T-cell (primary cell): ENCODE measurements at regions of chr10 and their contacts with region 1.

Region 1: DNA sequence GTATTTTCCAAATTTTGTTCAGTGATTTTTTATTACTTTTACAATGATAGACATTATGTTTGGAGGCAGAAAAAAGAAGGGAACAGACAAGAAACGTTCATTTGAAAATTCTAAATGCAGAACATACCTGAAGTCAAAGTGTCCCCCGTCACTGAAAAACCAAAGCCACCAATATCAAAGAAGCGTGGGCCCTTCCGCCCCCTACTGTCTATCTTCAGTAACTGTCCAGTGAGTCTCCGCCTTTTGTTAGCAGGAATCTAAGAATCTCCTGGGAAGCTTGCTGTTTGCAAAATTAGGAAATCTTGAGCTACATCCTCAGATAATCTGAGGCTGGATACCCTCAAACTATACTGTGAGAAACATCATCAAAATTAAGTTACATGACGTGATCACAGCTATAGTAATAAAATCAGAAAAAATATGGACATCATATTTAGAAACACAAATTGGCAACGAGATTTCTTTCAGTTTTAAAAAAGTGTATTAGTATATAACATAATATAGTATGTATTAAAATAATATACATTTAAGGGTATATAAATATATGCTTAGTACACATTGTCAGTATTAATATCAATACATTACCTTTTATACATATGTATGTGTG is 169.3 kb upstream of the AKR1E2 start:
- DNase-seq: peak in 30 of 35 experiments; percentile 8 to 74 (median 28)
- ATAC-seq: no peak
- H3K4me3 ChIP-seq: no peak overlapping the region
- H3K4me3 Mint-ChIP-seq: no peak overlapping the region
- H3K27ac ChIP-seq: no peak overlapping the region
- H3K27ac Mint-ChIP-seq: no peak overlapping the region
- H3K4me1 ChIP-seq: peaks cover 0 to 4% of the 10 kb centered on the region in 2 experiments
- H3K4me1 Mint-ChIP-seq: peaks cover 0 to 11% (median 7%) of the 10 kb centered on the region in 3 donors
- H3K27me3 ChIP-seq: peaks cover 0 to 9% of the 10 kb centered on the region in 2 experiments
- H3K27me3 Mint-ChIP-seq: peaks cover 3 to 4% of the 10 kb centered on the region in 2 donors

Region 2: DNA sequence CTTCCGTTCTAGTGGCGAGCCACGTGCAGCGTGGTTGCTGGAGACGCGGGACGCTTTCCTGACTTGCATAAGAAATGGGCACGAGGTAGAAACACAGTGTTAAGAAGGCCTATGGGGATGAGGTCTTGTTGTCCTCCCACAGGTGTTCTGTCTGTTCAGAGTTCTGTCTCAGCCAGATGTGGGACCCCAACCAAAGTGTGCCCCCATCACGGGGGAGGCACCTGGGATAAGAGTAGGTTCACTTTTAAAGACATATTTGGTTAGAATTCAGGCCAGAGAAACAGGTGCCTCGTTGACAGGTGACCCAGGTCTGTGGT is 1428.1 kb before region 1 on chr10:
- CTCF ChIA-PET with region 1: interaction called in 1 of 2 experiments, 11 read pairs
- POLR2A ChIA-PET with region 1: no interaction called
- DNase-seq: no peak
- ATAC-seq: no peak
- H3K4me3 ChIP-seq: no peak overlapping the region
- H3K4me3 Mint-ChIP-seq: no peak overlapping the region
- H3K27ac ChIP-seq: peak overlapping the region; percentile 54
- H3K27ac Mint-ChIP-seq: no peak overlapping the region
- H3K4me1 ChIP-seq: peaks cover 2 to 20% of the 10 kb centered on the region in 2 experiments
- H3K4me1 Mint-ChIP-seq: peaks cover 11 to 22% (median 17%) of the 10 kb centered on the region in 3 donors
- H3K27me3 ChIP-seq: peaks cover 0 to 10% of the 10 kb centered on the region in 2 experiments
- H3K27me3 Mint-ChIP-seq: peaks cover 5 to 10% of the 10 kb centered on the region in 2 donors

Region 3: GRCh38 chr10:3239066-3239919 is 1417.4 kb before region 1 on chr10:
- CTCF ChIA-PET with region 1: interaction called, 14 to 29 read pairs
- POLR2A ChIA-PET with region 1: no interaction called
- DNase-seq: peak; percentile 12 to 81 (median 60)
- ATAC-seq: peak; percentile 71 to 84 (median 78)
- H3K4me3 ChIP-seq: no peak overlapping the region
- H3K4me3 Mint-ChIP-seq: no peak overlapping the region
- H3K27ac ChIP-seq: no peak overlapping the region
- H3K27ac Mint-ChIP-seq: no peak overlapping the region
- H3K4me1 ChIP-seq: peaks cover 0 to 11% of the 10 kb centered on the region in 2 experiments
- H3K4me1 Mint-ChIP-seq: peaks cover 0 to 7% (median 4%) of the 10 kb centered on the region in 3 donors
- H3K27me3 ChIP-seq: peaks cover 0 to 35% of the 10 kb centered on the region in 2 experiments
- H3K27me3 Mint-ChIP-seq: peaks cover 14 to 16% of the 10 kb centered on the region in 2 donors

Region 4: GRCh38 chr10:3740157-3740871 is 916.4 kb before region 1 on chr10:
- CTCF ChIA-PET with region 1: interaction called in 1 of 2 experiments, 10 read pairs
- POLR2A ChIA-PET with region 1: no interaction called
- DNase-seq: no peak
- ATAC-seq: peak; percentile 60 to 86 (median 67)
- H3K4me3 ChIP-seq: no peak overlapping the region
- H3K4me3 Mint-ChIP-seq: no peak overlapping the region
- H3K27ac ChIP-seq: no peak overlapping the region
- H3K27ac Mint-ChIP-seq: peak overlapping the region; percentile 85 to 93
- H3K4me1 ChIP-seq: peaks cover 0 to 5% of the 10 kb centered on the region in 2 experiments
- H3K4me1 Mint-ChIP-seq: peaks cover 6 to 29% (median 24%) of the 10 kb centered on the region in 3 donors
- H3K27me3 ChIP-seq: no peaks in the 10 kb centered on the region
- H3K27me3 Mint-ChIP-seq: no peaks in the 10 kb centered on the region

Region 5: DNA sequence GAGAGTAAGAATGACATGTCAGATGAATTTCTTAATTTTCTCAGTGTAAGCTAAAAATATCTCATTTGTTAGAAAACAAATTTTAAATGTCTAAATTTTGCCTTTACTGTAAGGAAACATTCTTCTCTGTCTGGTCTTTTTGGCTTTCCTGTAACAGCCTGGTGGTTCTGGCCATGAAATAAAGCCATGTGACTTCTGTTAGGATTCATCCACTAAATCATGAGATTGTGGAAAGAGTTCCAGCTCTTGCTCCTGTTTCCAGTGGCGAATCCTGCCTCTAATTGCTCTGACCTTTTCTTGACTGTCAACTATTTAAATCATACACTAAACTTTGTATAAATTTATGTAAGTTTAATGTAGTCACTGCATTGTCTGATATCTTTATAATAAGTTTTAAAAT is 229.1 kb before region 1 on chr10:
- CTCF ChIA-PET with region 1: interaction called in 1 of 2 experiments, 10 read pairs
- POLR2A ChIA-PET with region 1: no interaction called
- DNase-seq: no peak
- ATAC-seq: no peak
- H3K4me3 ChIP-seq: no peak overlapping the region
- H3K4me3 Mint-ChIP-seq: no peak overlapping the region
- H3K27ac ChIP-seq: no peak overlapping the region
- H3K27ac Mint-ChIP-seq: no peak overlapping the region
- H3K4me1 ChIP-seq: no peaks in the 10 kb centered on the region
- H3K4me1 Mint-ChIP-seq: no peaks in the 10 kb centered on the region
- H3K27me3 ChIP-seq: no peaks in the 10 kb centered on the region
- H3K27me3 Mint-ChIP-seq: peaks cover 0 to 7% of the 10 kb centered on the region in 2 donors

Region 6: GRCh38 chr10:4519658-4520402 is 136.8 kb before region 1 on chr10:
- CTCF ChIA-PET with region 1: no interaction called
- POLR2A ChIA-PET with region 1: no interaction called
- DNase-seq: no peak
- ATAC-seq: no peak
- H3K4me3 ChIP-seq: no peak overlapping the region
- H3K4me3 Mint-ChIP-seq: no peak overlapping the region
- H3K27ac ChIP-seq: no peak overlapping the region
- H3K27ac Mint-ChIP-seq: no peak overlapping the region
- H3K4me1 ChIP-seq: no peaks in the 10 kb centered on the region
- H3K4me1 Mint-ChIP-seq: peaks cover 0 to 5% (median 3%) of the 10 kb centered on the region in 3 donors
- H3K27me3 ChIP-seq: peaks cover 0 to 8% of the 10 kb centered on the region in 2 experiments
- H3K27me3 Mint-ChIP-seq: peaks cover 16 to 17% of the 10 kb centered on the region in 2 donors

Region 7: GRCh38 chr10:4699950-4700730 is 43.5 kb after region 1 on chr10:
- CTCF ChIA-PET with region 1: no interaction called
- POLR2A ChIA-PET with region 1: no interaction called
- DNase-seq: no peak
- ATAC-seq: no peak
- H3K4me3 ChIP-seq: no peak overlapping the region
- H3K4me3 Mint-ChIP-seq: no peak overlapping the region
- H3K27ac ChIP-seq: no peak overlapping the region
- H3K27ac Mint-ChIP-seq: no peak overlapping the region
- H3K4me1 ChIP-seq: no peaks in the 10 kb centered on the region
- H3K4me1 Mint-ChIP-seq: no peaks in the 10 kb centered on the region
- H3K27me3 ChIP-seq: peaks cover 0 to 9% of the 10 kb centered on the region in 2 experiments
- H3K27me3 Mint-ChIP-seq: peaks cover 13 to 17% of the 10 kb centered on the region in 2 donors

Region 8: GRCh38 chr10:5265139-5265538 is 608.5 kb after region 1 on chr10:
- CTCF ChIA-PET with region 1: no interaction called
- POLR2A ChIA-PET with region 1: no interaction called
- DNase-seq: no peak
- ATAC-seq: no peak
- H3K4me3 ChIP-seq: no peak overlapping the region
- H3K4me3 Mint-ChIP-seq: no peak overlapping the region
- H3K27ac ChIP-seq: no peak overlapping the region
- H3K27ac Mint-ChIP-seq: no peak overlapping the region
- H3K4me1 ChIP-seq: no peaks in the 10 kb centered on the region
- H3K4me1 Mint-ChIP-seq: no peaks in the 10 kb centered on the region
- H3K27me3 ChIP-seq: no peaks in the 10 kb centered on the region
- H3K27me3 Mint-ChIP-seq: no peaks in the 10 kb centered on the region

Region 9: GRCh38 chr10:6593241-6593671 is 1936.6 kb after region 1 on chr10:
- CTCF ChIA-PET with region 1: no interaction called
- POLR2A ChIA-PET with region 1: no interaction called
- DNase-seq: peak in 4 of 35 experiments; percentile 19 to 60 (median 45)
- ATAC-seq: peak; percentile 30 to 73 (median 62)
- H3K4me3 ChIP-seq: no peak overlapping the region
- H3K4me3 Mint-ChIP-seq: peak overlapping the region; percentile 64 to 91 (median 68)
- H3K27ac ChIP-seq: peak overlapping the region; percentile 85
- H3K27ac Mint-ChIP-seq: peak overlapping the region; percentile 97 to 98
- H3K4me1 ChIP-seq: peaks cover 54 to 95% of the 10 kb centered on the region in 2 experiments
- H3K4me1 Mint-ChIP-seq: peaks cover 95% of the 10 kb centered on the region in 3 donors
- H3K27me3 ChIP-seq: no peaks in the 10 kb centered on the region
- H3K27me3 Mint-ChIP-seq: no peaks in the 10 kb centered on the region